ENCODE measurements at regions of chrX and their contacts with region 1.

Region 1: DNA sequence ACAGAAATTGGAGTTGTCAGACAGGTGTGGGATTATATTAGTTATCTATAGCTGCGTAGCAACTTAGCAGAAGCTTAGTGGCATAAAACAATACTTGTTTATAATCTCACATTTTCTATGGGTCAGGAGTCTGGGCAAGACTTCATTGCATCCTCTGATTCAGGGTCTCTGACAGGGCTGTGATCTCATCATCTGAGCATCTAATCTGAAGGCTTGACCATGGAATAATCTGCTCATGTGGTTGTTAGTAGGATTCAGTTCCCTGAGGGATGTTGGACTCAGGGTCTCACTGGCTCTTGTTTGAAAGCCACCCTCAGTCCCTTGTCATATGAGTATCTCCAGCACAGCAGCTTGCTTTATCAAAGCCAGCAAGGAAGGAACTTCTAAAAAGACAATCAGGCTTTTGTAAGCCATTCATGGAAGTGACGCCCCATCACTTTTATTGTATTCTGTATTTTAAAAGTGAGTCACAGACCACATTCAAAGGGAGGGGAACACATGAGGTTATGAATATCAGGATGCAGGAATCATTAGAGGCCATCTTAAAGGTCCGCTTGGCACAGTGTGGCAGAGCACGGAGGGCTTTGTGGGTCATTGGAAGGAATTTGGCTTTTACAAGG is 37.2 kb upstream of the FAM9B start:
- DNase-seq: no peak
- H3K4me3 Mint-ChIP-seq: no peak overlapping the region
- H3K27ac Mint-ChIP-seq: no peak overlapping the region
- H3K4me1 Mint-ChIP-seq: peaks cover 18% of the 10 kb centered on the region
- H3K27me3 Mint-ChIP-seq: peaks cover 2% of the 10 kb centered on the region

Region 2: DNA sequence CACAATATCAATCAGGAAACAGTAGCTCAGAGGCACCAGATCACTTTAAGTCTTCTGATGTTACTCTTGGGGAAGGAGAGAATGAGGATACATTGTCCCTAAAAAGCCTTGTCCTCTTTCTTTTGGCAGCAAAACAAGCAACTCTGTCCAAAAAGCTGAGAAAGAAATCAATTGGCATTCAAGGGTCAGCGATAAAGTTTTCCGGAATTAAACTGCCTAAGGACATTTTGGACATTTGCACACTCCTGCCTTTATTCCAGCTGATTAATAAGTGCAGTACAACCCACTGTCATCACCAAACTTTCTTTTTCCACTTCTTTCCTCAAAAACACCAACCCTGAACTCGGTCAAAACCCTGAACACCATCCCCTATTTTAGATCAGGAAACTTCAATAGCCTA is 184.1 kb before region 1 on chrX:
- CTCF ChIA-PET with region 1: no interaction called
- POLR2A ChIA-PET with region 1: no interaction called
- intact Hi-C with region 1: no loop called
- DNase-seq: no peak
- H3K4me3 Mint-ChIP-seq: no peak overlapping the region
- H3K27ac Mint-ChIP-seq: no peak overlapping the region
- H3K4me1 Mint-ChIP-seq: no peaks in the 10 kb centered on the region
- H3K27me3 Mint-ChIP-seq: no peaks in the 10 kb centered on the region

Region 3: GRCh38 chrX:8988446-8988845 is 82.7 kb before region 1 on chrX:
- CTCF ChIA-PET with region 1: no interaction called
- POLR2A ChIA-PET with region 1: no interaction called
- intact Hi-C with region 1: loop called (anchors 10 kb)
- DNase-seq: peak; percentile 46
- H3K4me3 Mint-ChIP-seq: no peak overlapping the region
- H3K27ac Mint-ChIP-seq: no peak overlapping the region
- H3K4me1 Mint-ChIP-seq: peaks cover 20% of the 10 kb centered on the region
- H3K27me3 Mint-ChIP-seq: no peaks in the 10 kb centered on the region